Activated CD4-positive, alpha-beta memory T cell treated with anti-CD3 and anti-CD28 coated beads for 36 hours (primary cell): ENCODE measurements at regions of chr2 and their contacts with region 1.

Region 1: DNA sequence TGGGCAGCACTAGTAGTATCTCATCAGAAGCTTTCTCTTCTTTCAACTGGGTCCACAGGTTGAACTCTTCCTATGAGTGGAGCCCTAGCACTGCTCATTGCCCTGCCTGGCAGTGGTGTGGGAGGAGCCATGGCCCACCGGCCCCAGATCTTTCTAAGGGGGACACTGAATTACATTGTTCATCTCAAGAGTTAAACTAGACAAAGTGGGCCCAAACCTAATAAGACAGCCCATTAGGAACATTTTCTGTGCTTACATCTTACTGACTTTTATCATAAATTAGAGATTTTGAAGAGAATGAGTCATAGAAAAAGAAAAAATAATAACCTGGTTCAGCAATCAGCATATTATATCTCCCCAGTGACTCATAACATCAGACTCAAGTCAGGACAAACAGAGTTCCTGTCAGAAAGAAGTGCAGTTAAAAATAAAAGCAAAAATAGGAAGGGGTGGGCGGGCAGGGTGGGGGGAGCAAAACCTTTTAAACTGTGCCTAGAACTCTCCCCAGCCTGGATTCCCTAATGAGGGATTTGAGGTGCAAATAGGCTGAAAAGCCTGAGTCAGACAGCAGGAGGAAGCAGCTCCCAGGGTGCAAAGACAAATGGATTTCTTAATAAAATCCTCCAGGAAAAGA is 161.6 kb upstream of the TRIB2 start:
- DNase-seq: peak; percentile 52
- H3K4me3 Mint-ChIP-seq: peak overlapping the region; percentile 21
- H3K27ac Mint-ChIP-seq: peak overlapping the region; percentile 80
- H3K4me1 Mint-ChIP-seq: peaks cover 40% of the 10 kb centered on the region
- H3K27me3 Mint-ChIP-seq: no peaks in the 10 kb centered on the region

Region 2: GRCh38 chr2:12430407-12431133 is 124.6 kb before region 1 on chr2:
- CTCF ChIA-PET with region 1: no interaction called
- POLR2A ChIA-PET with region 1: no interaction called
- intact Hi-C with region 1: loop called (anchors 5 kb)
- DNase-seq: peak; percentile 53
- H3K4me3 Mint-ChIP-seq: peak overlapping the region; percentile 33
- H3K27ac Mint-ChIP-seq: peak overlapping the region; percentile 74
- H3K4me1 Mint-ChIP-seq: peaks cover 14% of the 10 kb centered on the region
- H3K27me3 Mint-ChIP-seq: no peaks in the 10 kb centered on the region

Region 3: GRCh38 chr2:12636837-12637581 is 81.9 kb after region 1 on chr2:
- CTCF ChIA-PET with region 1: no interaction called
- POLR2A ChIA-PET with region 1: no interaction called
- intact Hi-C with region 1: no loop called
- DNase-seq: no peak
- H3K4me3 Mint-ChIP-seq: no peak overlapping the region
- H3K27ac Mint-ChIP-seq: no peak overlapping the region
- H3K4me1 Mint-ChIP-seq: peaks cover 26% of the 10 kb centered on the region
- H3K27me3 Mint-ChIP-seq: no peaks in the 10 kb centered on the region